ENCODE measurements at regions of chr3 and their contacts with region 1.

Region 1: DNA sequence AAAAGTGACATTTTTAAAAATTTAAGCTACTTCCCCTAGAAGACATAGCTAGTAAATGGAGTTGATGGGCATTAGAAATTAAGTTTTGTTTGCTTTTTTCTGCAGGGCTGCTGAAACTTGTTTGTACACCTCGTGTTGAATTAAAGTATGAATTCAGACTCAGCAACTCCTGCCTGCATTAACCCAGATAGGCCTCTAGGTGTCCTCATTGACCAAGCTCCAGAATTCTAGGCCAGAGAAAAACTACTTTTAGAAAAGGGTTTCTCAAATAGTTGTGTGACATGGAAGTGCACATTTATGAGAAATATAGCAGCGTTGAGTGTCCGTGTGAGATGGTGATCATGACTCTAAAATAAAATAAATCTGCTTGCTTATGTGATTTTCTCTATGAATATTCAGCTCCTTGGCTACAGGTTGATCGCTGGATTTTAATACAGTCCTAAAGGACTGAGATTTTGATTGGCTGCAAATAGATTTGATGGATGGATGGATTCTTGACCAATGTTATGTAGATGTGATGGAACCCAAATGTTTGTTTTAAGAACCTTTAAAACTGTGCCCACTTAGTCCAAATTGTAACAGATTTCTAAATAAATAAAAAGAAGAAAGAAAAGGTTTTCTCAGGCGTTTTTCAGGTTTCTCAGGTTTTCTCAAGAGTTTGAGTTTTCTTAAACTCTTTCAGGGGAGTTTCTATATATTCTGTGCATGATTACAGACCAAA is 39.4 kb upstream of the LMOD3 start:
- DNase-seq: no peak
- ATAC-seq: peak; percentile 92
- H3K4me3 ChIP-seq: no peak overlapping the region
- H3K27ac ChIP-seq: no peak overlapping the region
- H3K4me1 ChIP-seq: no peaks in the 10 kb centered on the region
- H3K27me3 ChIP-seq: no peaks in the 10 kb centered on the region
- CTCF ChIP-seq: peak; percentile 96

Region 2: GRCh38 chr3:69306239-69307185 is 144.8 kb after region 1 on chr3:
- intact Hi-C with region 1: loop called (anchors 10 kb)
- DNase-seq: peak; percentile 73
- ATAC-seq: peak; percentile 99
- H3K4me3 ChIP-seq: no peak overlapping the region
- H3K27ac ChIP-seq: peak overlapping the region; percentile 49
- H3K4me1 ChIP-seq: peaks cover 15% of the 10 kb centered on the region
- H3K27me3 ChIP-seq: no peaks in the 10 kb centered on the region
- CTCF ChIP-seq: peak; percentile 96

Region 3: GRCh38 chr3:69425261-69425660 is 263.5 kb after region 1 on chr3:
- intact Hi-C with region 1: loop called (anchors 10 kb)
- DNase-seq: no peak
- ATAC-seq: peak; percentile 84
- H3K4me3 ChIP-seq: no peak overlapping the region
- H3K27ac ChIP-seq: no peak overlapping the region
- H3K4me1 ChIP-seq: peaks cover 12% of the 10 kb centered on the region
- H3K27me3 ChIP-seq: no peaks in the 10 kb centered on the region
- CTCF ChIP-seq: peak; percentile 68

Region 4: DNA sequence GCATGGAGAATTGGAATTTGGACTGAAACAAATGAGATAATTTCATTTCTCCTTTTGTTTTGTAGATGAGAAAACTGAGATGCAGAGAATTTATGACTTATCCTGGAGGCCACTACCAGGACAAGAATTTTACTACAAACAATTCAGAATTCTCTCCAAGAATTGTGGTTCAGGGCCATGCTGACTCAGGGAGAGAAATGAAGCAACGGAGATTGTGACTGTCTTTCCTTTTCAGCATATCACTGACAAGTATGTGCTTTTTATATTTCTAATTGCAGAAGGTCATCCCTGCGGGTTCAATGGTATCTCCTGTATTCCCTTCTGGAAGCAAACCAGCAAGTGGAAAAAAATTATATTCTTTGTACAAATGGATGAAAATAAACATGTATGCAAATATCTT is 406.7 kb after region 1 on chr3:
- intact Hi-C with region 1: no loop called
- DNase-seq: no peak
- ATAC-seq: no peak
- H3K4me3 ChIP-seq: no peak overlapping the region
- H3K27ac ChIP-seq: no peak overlapping the region
- H3K4me1 ChIP-seq: no peaks in the 10 kb centered on the region
- H3K27me3 ChIP-seq: no peaks in the 10 kb centered on the region
- CTCF ChIP-seq: no peak

Measured in upper lobe of right lung (tissue), 1 donor.